Mammary epithelial cell (primary cell): ENCODE measurements at regions of chr5 and their contacts with region 1.

Region 1: DNA sequence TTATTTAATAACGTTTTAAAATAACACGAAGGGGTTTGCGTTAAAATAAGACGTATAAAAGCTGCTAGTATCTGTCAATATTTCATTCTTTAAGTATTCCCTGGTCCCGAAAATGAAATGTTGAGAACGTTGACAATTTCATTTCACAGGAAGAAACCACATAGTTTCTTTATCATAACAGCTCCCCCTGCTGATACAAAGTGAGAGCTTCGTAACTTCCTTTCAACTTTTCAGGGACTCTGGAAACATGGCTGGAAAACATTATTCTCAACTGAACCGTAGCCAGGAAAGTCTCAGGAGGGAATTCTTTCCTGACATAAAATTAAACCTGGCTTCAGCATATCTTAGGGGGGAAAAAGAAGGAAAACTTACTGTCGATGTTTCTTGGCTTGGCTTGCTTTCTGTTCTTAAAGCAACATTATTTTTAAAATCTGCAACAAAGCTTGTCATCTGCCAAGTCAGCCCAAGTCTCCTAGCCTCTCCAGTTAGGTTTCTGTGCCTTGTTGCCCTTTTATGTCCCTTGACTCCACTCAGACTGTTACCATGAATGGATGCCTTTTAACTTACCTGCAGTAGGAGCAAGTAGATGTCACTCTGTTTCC is 122.9 kb upstream of the DAB2 start:
- DNase-seq: peak; percentile 44
- H3K4me3 ChIP-seq: no peak overlapping the region
- H3K27ac ChIP-seq: no peak overlapping the region
- H3K4me1 ChIP-seq: peaks cover 3% of the 10 kb centered on the region
- H3K27me3 ChIP-seq: no peaks in the 10 kb centered on the region
- CTCF ChIP-seq: peak; percentile 74 to 77

Region 2: GRCh38 chr5:39148983-39149534 is 398.6 kb before region 1 on chr5:
- CTCF ChIA-PET with region 1: no interaction called
- dilution Hi-C with region 1: no loop called
- in situ Hi-C with region 1: loop called in 1 of 2 experiments (anchors 25 kb)
- intact Hi-C with region 1: loop called (anchors 2 kb)
- DNase-seq: no peak
- H3K4me3 ChIP-seq: no peak overlapping the region
- H3K27ac ChIP-seq: no peak overlapping the region
- H3K4me1 ChIP-seq: no peaks in the 10 kb centered on the region
- H3K27me3 ChIP-seq: no peaks in the 10 kb centered on the region
- CTCF ChIP-seq: peak; percentile 33 to 41

Region 3: DNA sequence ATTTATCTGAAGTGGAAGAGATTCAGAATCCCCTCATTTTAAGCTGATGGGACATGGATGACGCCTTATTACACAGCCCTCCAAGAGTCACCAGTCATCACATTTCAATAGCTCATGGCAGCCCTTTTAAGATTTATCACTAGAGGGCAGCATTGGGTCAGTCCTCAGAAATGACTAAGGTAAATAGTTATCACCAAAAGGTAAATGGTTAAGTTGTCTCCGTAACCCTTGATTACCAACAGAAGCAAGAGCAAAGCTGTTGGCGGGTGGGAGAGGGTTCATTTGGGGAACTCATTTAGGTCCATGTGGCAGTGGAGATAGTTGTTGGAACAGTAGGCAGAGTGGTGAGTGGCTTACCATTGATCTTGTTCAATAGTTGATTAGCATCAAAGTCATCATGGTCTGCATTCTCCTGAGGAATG is 171.3 kb before region 1 on chr5:
- CTCF ChIA-PET with region 1: interaction called, 39 read pairs
- dilution Hi-C with region 1: loop called (anchors 5 kb)
- in situ Hi-C with region 1: loop called (anchors 5 kb)
- intact Hi-C with region 1: loop called (anchors 1 kb)
- DNase-seq: peak; percentile 52
- H3K4me3 ChIP-seq: no peak overlapping the region
- H3K27ac ChIP-seq: no peak overlapping the region
- H3K4me1 ChIP-seq: no peaks in the 10 kb centered on the region
- H3K27me3 ChIP-seq: no peaks in the 10 kb centered on the region
- CTCF ChIP-seq: peak; percentile 83 to 84

Region 4: GRCh38 chr5:39424736-39425637 is 122.7 kb before region 1 on chr5 and contains the start of gene DAB2:
- CTCF ChIA-PET with region 1: no interaction called
- dilution Hi-C with region 1: no loop called
- in situ Hi-C with region 1: no loop called
- intact Hi-C with region 1: loop called (anchors 1 kb)
- DNase-seq: peak; percentile 86
- H3K4me3 ChIP-seq: peak within 1 kb of the TSS; percentile 62 to 72 (median 66)
- H3K27ac ChIP-seq: peak within 1 kb of the TSS; percentile 79
- H3K4me1 ChIP-seq: peaks cover 41% of the 10 kb centered on the region
- H3K27me3 ChIP-seq: no peaks in the 10 kb centered on the region
- CTCF ChIP-seq: peak; percentile 11 to 49
- total RNA-seq, gene DAB2: 33.8 to 67.7 TPM

Region 5: DNA sequence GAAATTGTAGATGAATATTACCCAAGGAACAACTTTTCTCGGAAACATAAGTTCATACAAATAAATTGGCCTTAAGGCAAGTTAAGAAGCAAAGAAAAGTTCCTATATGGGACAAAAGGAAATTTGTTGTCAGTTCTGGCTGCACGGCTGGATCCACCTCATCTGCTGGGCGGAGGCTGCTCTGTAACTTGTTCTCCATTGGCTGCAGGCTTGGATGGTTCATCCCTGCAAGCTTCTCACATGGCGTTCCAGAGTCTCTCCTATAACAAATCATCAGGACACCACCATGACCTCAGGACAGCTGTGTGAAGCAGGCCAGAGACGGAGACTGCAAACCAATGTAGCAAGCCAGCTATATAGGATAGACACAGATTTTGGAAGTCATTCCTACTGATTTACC is 41.4 kb before region 1 on chr5:
- CTCF ChIA-PET with region 1: no interaction called
- dilution Hi-C with region 1: loop called (anchors 5 kb)
- in situ Hi-C with region 1: no loop called
- intact Hi-C with region 1: no loop called
- DNase-seq: no peak
- H3K4me3 ChIP-seq: no peak overlapping the region
- H3K27ac ChIP-seq: no peak overlapping the region
- H3K4me1 ChIP-seq: no peaks in the 10 kb centered on the region
- H3K27me3 ChIP-seq: no peaks in the 10 kb centered on the region
- CTCF ChIP-seq: no peak

Region 6: DNA sequence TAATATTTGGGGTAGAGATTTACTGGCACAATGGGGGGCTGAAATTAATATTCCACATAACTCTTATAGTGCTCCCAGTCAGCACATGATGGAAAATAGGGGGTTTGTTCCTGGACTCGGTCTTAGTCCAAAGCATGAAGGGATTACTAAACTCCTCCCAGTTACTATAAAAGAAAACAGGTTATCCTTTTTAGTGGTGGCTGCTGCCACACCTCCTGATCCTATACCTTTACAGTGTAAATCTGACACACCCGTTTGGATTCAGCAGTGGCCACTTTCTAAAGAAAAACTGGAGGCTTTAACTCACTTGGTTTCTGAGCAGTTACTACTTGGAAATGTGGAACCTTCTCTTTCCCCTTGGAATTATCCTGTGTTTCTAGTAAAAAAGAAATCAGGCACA is 559.2 kb after region 1 on chr5:
- CTCF ChIA-PET with region 1: no interaction called
- dilution Hi-C with region 1: no loop called
- in situ Hi-C with region 1: no loop called
- intact Hi-C with region 1: no loop called
- DNase-seq: no peak
- H3K4me3 ChIP-seq: no peak overlapping the region
- H3K27ac ChIP-seq: no peak overlapping the region
- H3K4me1 ChIP-seq: peaks cover 8% of the 10 kb centered on the region
- H3K27me3 ChIP-seq: no peaks in the 10 kb centered on the region
- CTCF ChIP-seq: no peak